ENCODE measurements at regions of chr1 and their contacts with region 1.

Region 1: GRCh38 chr1:95426772-95427171 is 192.8 kb downstream of the RWDD3 start:
- DNase-seq: no peak
- H3K4me3 ChIP-seq: no peak overlapping the region
- H3K27ac ChIP-seq: no peak overlapping the region
- H3K4me1 ChIP-seq: no peaks in the 10 kb centered on the region
- H3K27me3 ChIP-seq: no peaks in the 10 kb centered on the region
- CTCF ChIP-seq: no peak
- POLR2A ChIP-seq: no peak

Region 2: DNA sequence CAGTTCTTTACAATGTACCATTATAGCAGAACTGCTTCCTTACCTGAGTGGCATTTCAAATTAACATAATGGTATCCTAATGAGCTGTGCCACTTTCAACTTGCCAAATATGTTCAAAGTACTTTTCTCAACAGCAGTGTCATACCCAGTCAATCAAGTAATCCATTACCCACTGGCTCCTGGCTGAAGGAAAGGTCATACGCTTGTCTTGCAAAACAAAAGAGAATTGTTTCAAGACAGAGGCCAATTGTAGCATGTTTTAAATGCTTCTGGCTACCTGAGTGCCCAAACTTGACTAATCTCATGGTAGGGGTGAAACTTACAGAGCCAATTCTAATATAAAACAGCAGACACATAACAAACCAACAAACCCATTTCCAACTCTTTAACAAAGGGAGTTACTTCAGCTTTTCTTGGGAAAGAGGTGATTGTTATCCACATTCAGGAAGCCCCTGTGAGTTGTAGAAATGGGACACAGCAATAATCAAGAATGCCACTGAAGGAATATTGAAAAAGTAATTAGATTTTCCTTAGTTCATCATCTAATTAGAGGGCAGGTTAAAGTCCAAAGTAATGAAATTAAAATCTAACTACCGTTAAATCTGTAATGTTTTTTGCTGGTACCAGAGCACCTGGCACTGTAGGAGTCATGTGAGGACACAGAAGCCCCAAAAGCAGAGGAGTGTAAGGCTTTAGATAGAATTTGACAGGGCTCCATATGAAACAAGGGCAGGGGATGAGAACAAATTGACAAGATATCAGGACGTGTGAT is 49.1 kb after region 1 on chr1:
- intact Hi-C with region 1: loop called in 1 of 2 experiments (anchors 10 kb)
- DNase-seq: no peak
- H3K4me3 ChIP-seq: no peak overlapping the region
- H3K27ac ChIP-seq: no peak overlapping the region
- H3K4me1 ChIP-seq: no peaks in the 10 kb centered on the region
- H3K27me3 ChIP-seq: no peaks in the 10 kb centered on the region
- CTCF ChIP-seq: no peak
- POLR2A ChIP-seq: no peak